Activated CD8-positive, alpha-beta T cell treated with anti-CD3 and anti-CD28 coated beads for 36 hours (primary cell): ENCODE measurements at regions of chr6 and their contacts with region 1.

Region 1: GRCh38 chr6:106114492-106115265 is 28.5 kb downstream of the PRDM1 start:
- DNase-seq: peak; percentile 93
- ATAC-seq: peak; percentile 74
- H3K4me3 Mint-ChIP-seq: peak overlapping the region; percentile 46
- H3K27ac Mint-ChIP-seq: peak overlapping the region; percentile 71
- H3K4me1 Mint-ChIP-seq: peaks cover 89% of the 10 kb centered on the region
- H3K27me3 Mint-ChIP-seq: peaks cover 18% of the 10 kb centered on the region
- CTCF ChIP-seq: no peak

Region 2: DNA sequence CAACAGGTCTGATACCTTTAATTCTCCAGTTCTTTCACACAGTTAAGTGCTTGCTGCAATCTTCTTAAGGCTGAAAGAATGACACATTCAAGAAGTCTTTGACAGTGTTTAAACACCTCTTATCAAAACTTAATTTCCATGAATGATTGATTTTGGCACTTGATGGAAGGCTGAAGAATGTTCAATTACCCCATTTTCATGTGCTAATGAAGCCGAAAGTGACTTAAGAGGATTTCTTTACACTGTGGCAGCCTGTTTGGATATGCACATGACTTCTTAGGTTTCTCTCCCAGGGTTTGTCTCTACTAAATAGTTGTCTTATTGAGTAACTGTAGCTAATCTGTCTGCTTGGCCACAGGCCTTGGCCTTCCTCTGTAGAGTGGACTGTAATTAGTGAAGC is 109.7 kb before region 1 on chr6:
- CTCF ChIA-PET with region 1: no interaction called
- POLR2A ChIA-PET with region 1: no interaction called
- intact Hi-C with region 1: no loop called
- DNase-seq: no peak
- ATAC-seq: no peak
- H3K4me3 Mint-ChIP-seq: no peak overlapping the region
- H3K27ac Mint-ChIP-seq: no peak overlapping the region
- H3K4me1 Mint-ChIP-seq: no peaks in the 10 kb centered on the region
- H3K27me3 Mint-ChIP-seq: peaks cover 32% of the 10 kb centered on the region
- CTCF ChIP-seq: no peak

Region 3: GRCh38 chr6:106026748-106027715 is 87.6 kb before region 1 on chr6:
- CTCF ChIA-PET with region 1: no interaction called
- POLR2A ChIA-PET with region 1: no interaction called
- intact Hi-C with region 1: no loop called
- DNase-seq: peak; percentile 15
- ATAC-seq: no peak
- H3K4me3 Mint-ChIP-seq: no peak overlapping the region
- H3K27ac Mint-ChIP-seq: no peak overlapping the region
- H3K4me1 Mint-ChIP-seq: peaks cover 14% of the 10 kb centered on the region
- H3K27me3 Mint-ChIP-seq: peaks cover 31% of the 10 kb centered on the region
- CTCF ChIP-seq: no peak

Region 4: GRCh38 chr6:106069478-106069877 is 45.2 kb before region 1 on chr6:
- CTCF ChIA-PET with region 1: no interaction called
- POLR2A ChIA-PET with region 1: no interaction called
- intact Hi-C with region 1: no loop called
- DNase-seq: no peak
- ATAC-seq: no peak
- H3K4me3 Mint-ChIP-seq: no peak overlapping the region
- H3K27ac Mint-ChIP-seq: no peak overlapping the region
- H3K4me1 Mint-ChIP-seq: no peaks in the 10 kb centered on the region
- H3K27me3 Mint-ChIP-seq: peaks cover 5% of the 10 kb centered on the region
- CTCF ChIP-seq: no peak

Region 5: DNA sequence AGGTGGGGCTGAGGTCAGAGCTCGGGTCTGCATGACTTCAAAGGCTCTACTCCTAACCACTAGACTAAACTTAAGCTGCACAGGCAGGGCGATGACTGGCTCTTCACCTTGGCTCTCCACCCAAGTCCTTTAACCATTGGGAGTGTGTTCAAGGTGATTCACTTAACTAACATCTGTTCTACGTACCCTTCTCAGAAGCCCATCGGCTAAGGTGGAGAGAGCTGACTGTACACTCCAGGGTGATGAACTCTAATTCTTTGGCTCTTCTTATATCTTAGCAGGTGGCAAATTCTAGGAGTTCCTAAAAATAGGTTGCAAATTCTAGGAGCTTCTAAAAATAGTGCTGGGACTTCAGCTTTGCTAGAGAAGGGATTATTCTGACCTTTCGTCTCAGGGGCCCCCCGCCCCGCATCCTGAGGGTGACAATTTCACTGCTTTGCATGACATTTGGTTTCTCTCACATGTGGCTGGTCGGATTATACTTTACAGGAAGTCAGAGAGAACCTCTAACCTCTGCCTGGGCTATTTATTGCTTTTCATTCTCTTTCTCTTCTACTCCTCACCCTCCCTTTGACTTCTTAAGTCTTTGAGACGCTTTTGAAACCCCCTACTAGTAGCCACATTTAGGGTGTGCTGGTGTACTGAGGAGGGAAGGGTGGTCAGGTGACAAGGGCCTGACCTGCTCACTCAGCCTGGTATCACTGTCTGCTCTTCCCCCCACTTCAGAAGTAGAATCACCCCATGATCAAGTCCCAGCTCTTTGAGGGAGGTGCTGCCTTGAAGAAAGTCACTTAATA is 27.0 kb after region 1 on chr6:
- CTCF ChIA-PET with region 1: interaction called, 12 read pairs
- POLR2A ChIA-PET with region 1: interaction called, 21 read pairs
- intact Hi-C with region 1: no loop called
- DNase-seq: peak; percentile 96
- ATAC-seq: peak; percentile 89
- H3K4me3 Mint-ChIP-seq: peak overlapping the region; percentile 20
- H3K27ac Mint-ChIP-seq: peak overlapping the region; percentile 96
- H3K4me1 Mint-ChIP-seq: peaks cover 64% of the 10 kb centered on the region
- H3K27me3 Mint-ChIP-seq: peaks cover 2% of the 10 kb centered on the region
- CTCF ChIP-seq: no peak

Region 6: GRCh38 chr6:106187424-106187982 is 72.8 kb after region 1 on chr6:
- CTCF ChIA-PET with region 1: interaction called, 5 read pairs
- POLR2A ChIA-PET with region 1: interaction called, 6 read pairs
- intact Hi-C with region 1: loop called (anchors 1 kb)
- DNase-seq: no peak
- ATAC-seq: peak; percentile 32
- H3K4me3 Mint-ChIP-seq: peak overlapping the region; percentile 18
- H3K27ac Mint-ChIP-seq: peak overlapping the region; percentile 91
- H3K4me1 Mint-ChIP-seq: peaks cover 63% of the 10 kb centered on the region
- H3K27me3 Mint-ChIP-seq: no peaks in the 10 kb centered on the region
- CTCF ChIP-seq: no peak